Activated naive CD4-positive, alpha-beta T cell treated with anti-CD3 and anti-CD28 coated beads for 36 hours (primary cell): ENCODE measurements at regions of chr5 and their contacts with region 1.

Region 1: GRCh38 chr5:38922199-38922598 is 76.4 kb downstream of the OSMR start:
- DNase-seq: peak; percentile 68
- H3K4me3 Mint-ChIP-seq: no peak overlapping the region
- H3K27ac Mint-ChIP-seq: no peak overlapping the region
- H3K4me1 Mint-ChIP-seq: no peaks in the 10 kb centered on the region
- H3K27me3 Mint-ChIP-seq: peaks cover 16% of the 10 kb centered on the region

Region 2: DNA sequence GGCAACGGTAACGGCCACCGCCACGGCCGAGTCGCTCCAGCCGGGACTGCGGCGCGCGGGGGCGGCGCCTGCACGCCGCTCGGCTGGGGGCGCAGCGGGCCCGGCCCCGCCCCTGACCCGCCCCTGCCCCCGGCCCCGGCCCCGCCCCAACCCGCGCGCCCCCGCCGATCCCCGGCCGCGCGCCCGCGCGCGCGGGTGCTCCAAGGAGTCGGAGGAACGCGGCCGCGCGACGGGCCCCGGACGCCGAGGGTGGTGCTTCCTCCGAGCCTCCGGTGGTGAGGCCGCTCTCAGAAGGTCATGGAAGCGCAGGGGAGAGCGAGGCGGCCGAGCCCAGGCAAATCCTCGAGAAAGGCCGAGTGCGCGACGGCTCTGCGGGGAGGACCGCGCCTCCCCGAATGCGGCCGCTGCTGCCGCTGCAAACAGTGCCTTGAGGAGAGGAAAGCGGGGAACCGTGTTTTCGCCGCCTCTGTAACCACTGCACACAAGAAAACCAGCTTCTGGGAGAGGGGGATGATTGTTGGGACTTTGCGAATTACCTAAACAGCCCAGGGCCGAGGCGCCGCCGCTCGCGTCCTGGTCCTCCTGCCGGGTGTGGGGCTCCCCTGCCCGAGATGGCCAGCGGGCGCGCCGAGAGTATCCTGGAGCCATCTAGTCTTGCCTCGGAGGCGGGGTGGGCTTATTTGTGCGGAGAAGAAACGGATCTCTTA is 365.4 kb before region 1 on chr5 and contains the start of gene LIFR:
- CTCF ChIA-PET with region 1: no interaction called
- intact Hi-C with region 1: loop called (anchors 10 kb)
- DNase-seq: peak; percentile 66
- H3K4me3 Mint-ChIP-seq: peak within 1 kb of the TSS; percentile 79
- H3K27ac Mint-ChIP-seq: no peak within 1 kb of the TSS
- H3K4me1 Mint-ChIP-seq: peaks cover 7% of the 10 kb centered on the region
- H3K27me3 Mint-ChIP-seq: peaks cover 52% of the 10 kb centered on the region
- total RNA-seq, gene LIFR: 0.20 TPM in 1 of 2 experiments, not detected in the other

Region 3: DNA sequence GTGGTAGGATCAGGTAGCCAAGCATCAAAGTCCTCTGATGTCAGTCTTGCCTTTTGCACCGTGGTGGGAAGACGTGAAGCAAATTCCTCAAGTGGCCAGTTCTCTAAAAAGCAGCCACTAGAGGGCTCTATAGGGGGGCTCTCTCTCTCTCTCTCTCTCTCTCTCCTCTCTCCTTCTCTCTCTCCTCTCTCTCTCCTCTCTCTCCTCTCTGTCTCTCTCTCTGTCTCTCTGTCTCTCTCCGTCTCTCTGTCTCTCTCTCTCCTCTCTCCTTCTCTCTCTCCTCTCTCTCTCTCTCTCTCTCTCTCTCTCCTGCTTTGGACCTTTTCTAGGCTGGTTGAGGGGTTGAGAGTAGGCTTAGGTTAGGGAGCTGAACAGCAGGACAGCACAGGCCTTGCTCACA is 90.3 kb before region 1 on chr5:
- CTCF ChIA-PET with region 1: interaction called, 5 read pairs
- intact Hi-C with region 1: loop called (anchors 1 kb)
- DNase-seq: peak; percentile 21
- H3K4me3 Mint-ChIP-seq: no peak overlapping the region
- H3K27ac Mint-ChIP-seq: no peak overlapping the region
- H3K4me1 Mint-ChIP-seq: no peaks in the 10 kb centered on the region
- H3K27me3 Mint-ChIP-seq: peaks cover 15% of the 10 kb centered on the region